Transverse colon (tissue), 4 donors: ENCODE measurements at regions of chr2 and their contacts with region 1.

Region 1: DNA sequence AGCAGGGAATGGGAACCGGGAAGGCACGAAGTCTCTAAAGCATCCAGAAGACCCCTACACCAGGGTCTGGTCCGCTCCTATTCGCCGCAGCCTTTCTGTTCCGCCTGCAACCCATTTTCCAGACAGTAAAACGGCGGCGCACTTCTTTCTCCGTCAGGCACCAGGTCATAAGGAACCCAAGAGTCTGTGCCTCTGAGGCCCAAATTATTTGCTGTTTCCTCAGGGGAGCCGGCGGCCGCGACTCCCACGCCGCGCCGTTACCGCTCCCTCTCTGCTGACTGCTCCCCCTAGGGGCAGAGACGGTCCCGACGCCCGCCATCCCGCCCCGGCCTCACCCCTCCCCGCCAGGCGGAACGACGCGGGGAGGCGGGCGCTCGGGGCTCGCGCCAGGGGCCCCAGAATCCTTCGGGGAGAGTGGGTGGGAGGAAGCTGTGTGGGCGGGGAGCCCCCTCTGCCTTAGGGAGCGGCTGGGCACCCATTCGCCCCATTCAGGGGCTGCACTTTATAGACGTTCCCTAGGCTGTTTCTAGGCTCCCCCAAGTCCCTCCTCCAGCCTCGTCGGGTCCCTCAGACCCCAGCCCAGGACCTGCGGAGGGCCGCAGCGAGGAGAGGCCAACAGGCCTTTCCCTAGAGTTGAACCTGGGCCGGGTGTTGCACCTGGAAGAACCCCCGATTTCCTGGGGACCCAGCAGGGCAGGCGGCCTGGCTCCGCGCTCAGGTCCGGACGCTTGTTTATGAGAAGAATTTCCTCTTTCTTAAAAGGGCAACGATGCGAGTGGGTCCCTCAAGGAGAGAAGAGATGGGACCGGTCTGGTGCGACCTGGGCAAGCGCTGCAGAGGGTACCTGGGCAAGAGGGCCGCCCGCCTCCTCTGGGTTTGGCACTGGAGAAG is 3.6 kb upstream of the CTDSP1 start:
- DNase-seq: peak; percentile 95
- H3K4me3 ChIP-seq: peak overlapping the region; percentile 74 to 98 (median 88)
- H3K27ac ChIP-seq: peak overlapping the region; percentile 99 to 100 (median 100)
- H3K4me1 ChIP-seq: peaks cover 8 to 46% (median 35%) of the 10 kb centered on the region in 4 donors
- H3K27me3 ChIP-seq: no peaks in the 10 kb centered on the region
- CTCF ChIP-seq: peak; percentile 93 to 99 (median 94)
- EP300 ChIP-seq: no peak
- POLR2A ChIP-seq: peak; percentile 53

Region 2: GRCh38 chr2:218186355-218186766 is 209.7 kb before region 1 on chr2:
- in situ Hi-C with region 1: loop called in 2 of 4 experiments (anchors 25 kb)
- intact Hi-C with region 1: no loop called
- DNase-seq: peak; percentile 83
- H3K4me3 ChIP-seq: no peak overlapping the region
- H3K27ac ChIP-seq: peak overlapping the region; percentile 34 to 79 (median 62)
- H3K4me1 ChIP-seq: peaks cover 6 to 17% (median 11%) of the 10 kb centered on the region in 4 donors
- H3K27me3 ChIP-seq: no peaks in the 10 kb centered on the region
- CTCF ChIP-seq: peak; percentile 85 to 91 (median 86)
- EP300 ChIP-seq: no peak
- POLR2A ChIP-seq: no peak

Region 3: DNA sequence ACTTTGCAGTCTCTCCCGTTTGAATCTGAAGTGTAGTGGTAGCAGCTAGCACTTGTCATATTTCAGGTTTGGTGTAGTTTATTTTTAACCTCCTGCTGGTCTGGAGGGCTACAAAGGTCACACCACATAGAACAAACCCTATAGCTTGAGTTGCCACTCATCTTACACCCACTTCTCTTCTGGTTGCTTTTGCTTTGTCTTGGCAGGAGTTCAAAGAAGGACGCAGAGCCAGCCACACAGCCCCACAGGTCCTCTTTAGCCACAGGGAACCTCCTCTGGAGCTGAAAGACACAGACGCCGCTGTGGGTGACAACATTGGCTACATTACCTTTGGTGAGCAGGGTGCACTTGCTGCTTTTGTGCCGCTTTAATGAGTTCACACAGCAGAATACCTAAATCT is 150.8 kb before region 1 on chr2:
- in situ Hi-C with region 1: no loop called
- intact Hi-C with region 1: no loop called
- DNase-seq: no peak
- H3K4me3 ChIP-seq: no peak overlapping the region
- H3K27ac ChIP-seq: no peak overlapping the region
- H3K4me1 ChIP-seq: peaks cover 0 to 2% (median 0%) of the 10 kb centered on the region in 4 donors
- H3K27me3 ChIP-seq: no peaks in the 10 kb centered on the region
- CTCF ChIP-seq: no peak
- EP300 ChIP-seq: no peak
- POLR2A ChIP-seq: no peak

Region 4: DNA sequence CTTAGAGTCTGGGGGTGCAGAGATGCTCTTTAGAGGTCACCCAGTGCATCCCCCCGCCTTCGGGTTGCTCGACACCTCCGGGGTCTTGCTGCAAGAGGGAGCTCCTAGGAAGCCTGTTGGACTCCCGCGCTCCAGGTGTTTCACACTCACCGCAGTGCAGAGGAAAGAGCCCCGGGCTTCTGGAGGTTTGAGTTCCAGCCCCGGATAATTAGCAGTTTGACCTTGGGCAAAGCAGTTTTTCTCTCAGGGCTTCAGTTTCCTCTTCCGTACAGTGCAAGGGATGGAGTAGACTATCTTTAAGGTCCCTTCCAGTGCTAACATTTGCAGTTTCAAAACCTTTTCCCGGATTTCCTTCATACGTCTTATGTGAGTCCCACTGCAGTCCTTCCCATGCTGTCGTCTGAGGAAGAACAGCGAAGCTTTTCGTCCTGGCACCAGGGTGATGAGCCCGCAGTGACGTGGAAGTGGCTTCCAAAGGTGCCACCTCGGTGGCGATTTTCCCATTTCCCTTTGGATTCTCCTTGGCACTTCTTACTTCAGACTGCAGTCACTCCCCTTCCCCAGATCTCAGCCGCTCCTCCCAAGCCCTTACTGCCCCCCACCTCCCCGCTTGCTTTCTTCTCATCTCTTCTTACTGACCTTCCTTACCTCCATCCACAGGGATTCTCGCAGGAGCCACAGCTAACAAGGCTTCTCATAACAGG is 125.2 kb before region 1 on chr2:
- in situ Hi-C with region 1: loop called in 2 of 4 experiments (anchors 25 kb)
- intact Hi-C with region 1: loop called (anchors 1 kb)
- DNase-seq: peak; percentile 43
- H3K4me3 ChIP-seq: peak overlapping the region; percentile 63 to 98 (median 84)
- H3K27ac ChIP-seq: peak overlapping the region; percentile 85 to 89 (median 88)
- H3K4me1 ChIP-seq: peaks cover 26 to 59% (median 44%) of the 10 kb centered on the region in 4 donors
- H3K27me3 ChIP-seq: no peaks in the 10 kb centered on the region
- CTCF ChIP-seq: no peak
- EP300 ChIP-seq: no peak
- POLR2A ChIP-seq: no peak

Region 5: DNA sequence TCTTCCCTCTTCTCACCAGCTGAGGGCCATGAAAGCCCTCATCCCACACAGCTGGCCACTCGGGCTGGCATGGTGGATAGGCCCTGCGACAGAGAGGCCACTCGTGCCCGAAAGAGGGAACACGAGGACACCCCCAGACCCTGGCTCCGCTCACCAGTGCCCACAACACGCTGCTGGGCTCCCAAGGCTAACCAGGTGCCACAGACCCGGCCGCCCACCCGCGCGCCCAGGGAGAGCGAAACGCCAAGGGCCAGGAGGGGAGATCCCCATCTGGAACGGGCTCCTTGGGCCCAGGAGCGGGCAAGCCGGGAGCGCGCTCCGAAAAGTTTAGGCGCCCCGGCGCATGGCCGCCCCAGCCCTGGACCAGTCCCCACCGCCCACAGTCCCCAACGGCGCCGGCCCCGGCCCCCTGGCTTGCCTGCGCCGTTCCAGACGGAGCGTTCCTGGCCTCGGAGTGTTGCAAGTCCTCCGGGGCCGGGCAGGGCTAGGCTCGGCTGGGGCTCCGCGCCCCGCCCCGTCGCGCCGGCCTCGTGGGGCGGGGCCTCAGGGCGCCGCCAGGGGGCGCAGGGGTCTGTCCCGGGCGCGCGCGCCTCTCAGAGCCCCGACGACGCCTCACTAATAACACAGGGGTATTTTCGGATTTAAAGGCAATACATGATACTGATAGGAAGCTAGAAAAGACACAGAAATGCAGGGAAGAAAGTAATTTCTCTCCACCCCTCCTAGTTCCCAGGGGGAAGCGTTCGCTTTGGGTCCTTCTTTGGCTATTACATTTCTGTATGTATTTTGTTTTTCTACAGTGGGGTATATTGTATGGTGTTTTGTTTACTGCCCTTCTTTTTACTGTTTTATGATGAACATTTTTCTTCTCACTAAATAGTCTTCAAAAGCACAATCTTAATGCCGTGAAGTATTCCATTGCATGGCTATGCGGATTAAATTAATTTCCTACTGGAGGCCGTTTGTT is 103.7 kb before region 1 on chr2 and contains the start of gene TMBIM1:
- in situ Hi-C with region 1: loop called in 3 of 4 experiments (anchors 10 to 25 kb)
- intact Hi-C with region 1: loop called (anchors 2 kb)
- DNase-seq: peak; percentile 84
- H3K4me3 ChIP-seq: peak within 1 kb of the TSS; percentile 73 to 88 (median 79)
- H3K27ac ChIP-seq: peak within 1 kb of the TSS; percentile 96 to 98 (median 98)
- H3K4me1 ChIP-seq: peaks cover 42 to 72% (median 68%) of the 10 kb centered on the region in 4 donors
- H3K27me3 ChIP-seq: no peaks in the 10 kb centered on the region
- CTCF ChIP-seq: peak; percentile 55 to 94 (median 83)
- EP300 ChIP-seq: no peak
- POLR2A ChIP-seq: peak; percentile 91
- total RNA-seq, gene TMBIM1: 80.0 to 356 (median 200) TPM

Region 6: DNA sequence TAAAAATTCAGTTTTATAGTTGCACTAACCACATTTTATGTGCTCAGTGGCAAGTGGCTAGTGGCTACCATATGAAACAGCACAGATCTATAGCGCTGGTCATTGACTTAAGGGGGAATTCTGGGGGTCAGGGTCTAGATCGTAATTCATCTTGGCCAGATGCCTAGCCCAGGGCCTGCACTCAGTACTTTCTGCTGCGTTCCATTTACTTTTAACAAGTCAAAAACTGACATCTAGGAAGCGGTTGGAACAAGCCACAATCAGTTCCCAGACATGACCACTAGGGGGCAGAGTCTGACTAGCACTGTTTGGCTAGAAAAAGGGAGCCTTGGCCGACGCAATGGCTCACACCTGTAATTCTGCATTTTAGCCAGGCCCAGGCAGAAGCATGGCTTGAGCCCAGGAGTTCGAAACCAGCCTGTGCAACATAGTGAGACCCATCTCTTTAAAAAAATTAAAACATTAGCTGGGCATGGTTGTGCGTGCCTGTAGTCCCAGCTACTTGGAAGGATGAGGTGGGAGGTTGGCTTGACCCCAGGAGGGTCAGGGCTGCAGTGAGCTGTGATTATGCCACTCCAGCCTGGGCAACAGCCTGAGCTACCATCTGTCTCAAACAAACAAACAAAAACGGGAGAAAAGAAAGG is 94.7 kb before region 1 on chr2:
- in situ Hi-C with region 1: loop called in 3 of 4 experiments (anchors 10 to 25 kb)
- intact Hi-C with region 1: loop called (anchors 2 kb)
- DNase-seq: peak; percentile 93
- H3K4me3 ChIP-seq: no peak overlapping the region
- H3K27ac ChIP-seq: peak overlapping the region in 1 of 4 donors; percentile 33
- H3K4me1 ChIP-seq: peaks cover 0 to 7% (median 1%) of the 10 kb centered on the region in 4 donors
- H3K27me3 ChIP-seq: no peaks in the 10 kb centered on the region
- CTCF ChIP-seq: peak; percentile 96 to 98 (median 97)
- EP300 ChIP-seq: no peak
- POLR2A ChIP-seq: no peak